ENCODE measurements at regions of chr13 and their contacts with region 1.

Region 1: DNA sequence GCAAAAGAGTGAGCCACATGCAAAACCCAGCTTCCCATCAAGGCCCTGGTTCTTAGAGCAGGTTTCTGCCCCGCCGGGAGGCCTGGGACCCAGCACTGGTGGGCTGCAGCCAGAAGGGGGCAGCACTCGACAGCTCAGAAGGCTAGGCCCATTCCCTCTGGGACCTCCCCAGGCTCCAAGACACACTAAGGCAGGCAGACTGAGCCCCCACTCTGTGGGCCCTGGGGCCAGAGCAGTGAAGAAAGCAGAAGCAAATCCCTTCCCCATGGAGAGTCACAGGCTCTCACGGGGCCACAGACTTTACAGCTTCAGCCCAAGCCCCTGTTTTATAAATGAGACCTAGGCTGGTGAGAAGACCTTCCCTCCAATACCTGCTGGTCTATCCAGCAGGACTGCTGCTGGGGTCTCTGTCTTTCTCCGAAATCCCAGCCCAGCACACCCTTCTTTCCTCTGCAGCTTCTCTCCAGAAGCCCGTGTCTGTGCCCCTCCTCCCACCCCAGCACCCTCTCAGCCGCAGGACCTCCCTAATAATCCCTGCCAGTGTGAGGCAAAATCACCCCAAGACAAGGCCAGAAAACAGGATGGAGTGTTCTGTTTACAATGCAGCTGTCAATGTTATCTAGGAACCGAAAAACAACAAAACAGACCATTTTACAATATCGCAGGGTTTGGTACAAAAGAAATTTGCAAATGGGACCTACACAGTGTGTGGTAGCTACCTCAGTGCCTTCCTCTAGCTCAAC is 109.3 kb downstream of the ABCC4 start:
- DNase-seq: peak; percentile 74

Region 2: DNA sequence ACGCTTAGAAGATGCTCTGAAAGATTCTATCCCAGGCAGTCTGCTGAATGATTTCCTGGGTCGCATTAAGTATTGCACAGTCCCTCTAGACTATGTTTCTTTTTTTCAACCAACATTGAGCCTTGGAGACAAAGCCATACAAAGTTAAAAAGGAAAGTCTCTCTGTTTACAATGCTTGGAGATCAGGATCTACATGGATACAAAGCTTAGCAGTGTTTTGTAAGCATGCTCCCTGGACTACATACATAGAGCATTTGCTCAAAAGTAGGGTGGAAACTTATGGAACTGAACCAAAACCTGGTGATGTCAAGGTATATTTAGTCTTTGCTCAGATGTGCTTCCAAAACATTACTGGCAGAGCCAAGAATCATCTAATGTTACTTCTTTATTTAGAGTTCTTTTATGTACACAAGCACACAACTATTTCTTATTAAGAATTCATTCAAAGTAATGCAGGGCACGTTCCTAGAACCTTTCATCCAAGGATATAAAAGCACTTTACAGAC is 131.9 kb before region 1 on chr13:
- CTCF ChIA-PET with region 1: no interaction called
- POLR2A ChIA-PET with region 1: no interaction called
- DNase-seq: no peak

Region 3: DNA sequence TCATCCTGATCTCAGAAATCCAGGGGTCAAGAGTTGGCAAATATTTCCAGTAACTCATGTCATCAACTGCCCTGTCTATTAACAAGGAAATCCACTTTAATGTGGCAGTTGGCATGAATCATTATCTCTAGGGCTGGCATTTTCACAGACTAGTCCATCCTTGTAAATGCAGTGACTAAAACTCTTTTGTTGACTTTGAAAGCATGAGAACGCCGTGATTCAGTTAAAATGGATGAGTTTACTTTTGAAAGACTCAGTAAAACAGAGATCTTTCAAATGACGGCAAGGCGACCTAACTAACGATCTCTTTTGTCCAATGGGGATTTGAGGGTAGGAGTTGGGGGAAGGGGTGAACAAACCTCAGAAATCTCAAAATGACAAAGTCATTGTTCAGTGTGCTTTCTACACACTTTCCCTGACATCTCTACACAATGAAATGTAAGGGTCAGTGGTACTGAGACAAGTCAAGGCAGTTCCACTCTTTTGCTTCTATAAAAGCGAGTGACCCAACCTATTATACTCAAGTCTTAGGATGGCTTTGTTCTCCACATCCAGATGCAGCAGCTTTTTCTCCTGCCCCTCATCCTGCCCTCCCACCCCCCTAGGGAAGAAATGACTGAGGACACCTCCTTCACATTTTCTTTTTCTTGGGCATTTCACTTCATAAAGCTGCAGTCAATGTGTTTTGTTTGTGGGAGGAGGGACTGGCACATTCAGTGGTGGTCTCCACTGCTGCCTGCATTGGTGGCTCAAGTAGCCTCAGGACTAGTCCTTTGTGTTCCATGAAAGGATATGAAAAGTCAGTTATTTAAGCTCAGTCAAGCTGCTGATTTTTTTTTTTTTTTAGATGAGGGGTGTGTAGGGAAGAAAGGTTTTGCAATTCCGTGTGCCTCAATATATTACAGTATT is 91.2 kb before region 1 on chr13:
- CTCF ChIA-PET with region 1: no interaction called
- POLR2A ChIA-PET with region 1: no interaction called
- DNase-seq: no peak

Region 4: GRCh38 chr13:95174517-95174916 is 17.5 kb before region 1 on chr13:
- CTCF ChIA-PET with region 1: no interaction called
- POLR2A ChIA-PET with region 1: no interaction called
- DNase-seq: no peak

Region 5: GRCh38 chr13:95378603-95379002 is 186.6 kb after region 1 on chr13:
- CTCF ChIA-PET with region 1: interaction called, 20 read pairs
- POLR2A ChIA-PET with region 1: no interaction called
- DNase-seq: no peak

Measured in HEK293T (cell line).